ENCODE measurements at regions of chr10 and their contacts with region 1.

Region 1: DNA sequence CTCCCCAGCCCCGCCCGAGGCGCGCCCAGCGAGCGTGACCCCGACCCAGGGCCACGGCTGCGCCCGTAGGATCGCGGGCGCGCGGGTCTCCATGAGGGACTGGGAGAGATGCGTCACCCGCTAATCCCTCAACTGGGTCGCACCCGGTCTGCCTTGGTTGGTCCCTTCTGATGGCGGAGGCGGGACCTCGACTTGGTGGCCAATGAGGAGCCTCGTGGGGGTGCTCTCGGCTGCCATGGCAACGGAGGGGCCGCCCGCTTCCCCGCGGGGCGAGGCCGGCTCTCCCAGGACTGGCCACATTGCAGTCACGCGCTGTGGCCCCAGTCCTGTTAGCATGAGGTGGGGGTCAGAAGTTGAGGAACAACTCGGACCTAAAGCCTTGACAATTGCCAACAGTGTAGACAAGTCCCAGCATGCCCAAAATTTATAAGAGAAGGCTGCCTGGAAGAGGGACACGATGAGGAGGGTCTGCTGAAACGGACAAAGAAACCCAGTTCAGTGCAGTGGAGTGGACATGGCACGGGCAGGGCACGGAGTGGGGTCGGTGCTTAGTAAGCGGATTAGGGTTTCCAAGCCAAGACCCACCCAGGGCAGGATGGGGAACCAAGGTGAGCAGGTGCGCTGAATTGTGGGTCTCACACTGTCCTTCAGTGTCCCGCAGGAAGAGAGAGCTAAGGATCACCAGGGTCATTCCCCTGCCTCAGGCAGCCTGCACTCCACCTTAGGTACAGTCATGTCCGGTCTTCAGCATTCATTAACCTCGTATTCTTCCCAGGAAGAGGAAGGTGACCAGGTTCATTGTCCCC is 24.4 kb downstream of the DDIT4 start:
- DNase-seq: peak; percentile 56 to 93 (median 85)
- ATAC-seq: peak; percentile 56 to 63 (median 60)
- H3K4me3 ChIP-seq: peak overlapping the region in 1 of 2 donors; percentile 72
- H3K4me3 Mint-ChIP-seq: peak overlapping the region; percentile 72 to 78 (median 77)
- H3K27ac ChIP-seq: peak overlapping the region; percentile 99
- H3K27ac Mint-ChIP-seq: peak overlapping the region; percentile 66 to 96
- H3K4me1 ChIP-seq: peaks cover 8 to 49% of the 10 kb centered on the region in 2 experiments
- H3K4me1 Mint-ChIP-seq: peaks cover 50 to 60% (median 57%) of the 10 kb centered on the region in 3 donors
- H3K27me3 ChIP-seq: no peaks in the 10 kb centered on the region
- H3K27me3 Mint-ChIP-seq: no peaks in the 10 kb centered on the region

Region 2: GRCh38 chr10:72223743-72224101 is 74.4 kb before region 1 on chr10:
- CTCF ChIA-PET with region 1: no interaction called
- POLR2A ChIA-PET with region 1: no interaction called
- DNase-seq: no peak
- ATAC-seq: no peak
- H3K4me3 ChIP-seq: no peak overlapping the region
- H3K4me3 Mint-ChIP-seq: peak overlapping the region in 1 of 3 donors; percentile 55
- H3K27ac ChIP-seq: no peak overlapping the region
- H3K27ac Mint-ChIP-seq: peak overlapping the region in 1 of 2 donors; percentile 62
- H3K4me1 ChIP-seq: peaks cover 25 to 43% of the 10 kb centered on the region in 2 experiments
- H3K4me1 Mint-ChIP-seq: peaks cover 54 to 64% (median 56%) of the 10 kb centered on the region in 3 donors
- H3K27me3 ChIP-seq: no peaks in the 10 kb centered on the region
- H3K27me3 Mint-ChIP-seq: no peaks in the 10 kb centered on the region

Region 3: DNA sequence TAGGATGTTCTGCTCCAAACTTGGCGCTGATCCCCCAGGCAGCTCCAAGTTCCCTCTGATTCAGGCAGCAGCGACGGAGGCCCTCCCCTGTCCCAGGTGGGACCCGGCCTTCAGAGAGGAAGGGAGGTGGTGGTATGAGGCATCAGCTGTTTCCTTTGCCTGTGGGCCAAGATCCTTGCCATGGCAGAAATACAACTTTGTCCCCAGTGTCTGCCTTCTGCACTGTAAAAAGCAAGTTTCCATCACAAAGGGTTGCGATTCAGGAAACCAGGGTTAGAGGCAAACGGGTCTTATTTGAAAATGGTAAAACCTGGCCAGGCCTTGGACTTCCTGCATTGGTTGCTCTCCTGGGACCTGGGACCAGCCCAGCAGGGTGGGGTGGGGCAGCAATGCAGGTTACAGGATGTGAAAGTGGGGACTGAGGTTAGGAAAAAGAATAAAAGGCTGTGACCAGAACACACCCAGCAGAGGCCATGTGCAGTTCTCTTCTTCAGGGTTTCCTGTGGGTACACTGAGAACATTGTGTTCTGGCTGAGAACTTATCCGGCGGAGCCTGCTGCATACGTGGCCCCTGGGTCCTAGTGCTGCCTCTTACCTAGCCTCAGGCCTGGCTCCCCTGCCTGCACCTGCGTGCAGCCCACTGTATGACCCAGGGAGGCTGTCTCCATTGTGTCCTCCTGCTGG is 49.6 kb before region 1 on chr10:
- CTCF ChIA-PET with region 1: interaction called in 1 of 2 experiments, 5 read pairs
- POLR2A ChIA-PET with region 1: interaction called, 6 to 10 read pairs
- DNase-seq: peak; percentile 47 to 90 (median 72)
- ATAC-seq: peak; percentile 86 to 92 (median 90)
- H3K4me3 ChIP-seq: peak overlapping the region; percentile 36 to 75
- H3K4me3 Mint-ChIP-seq: peak overlapping the region; percentile 68 to 77 (median 77)
- H3K27ac ChIP-seq: peak overlapping the region; percentile 78
- H3K27ac Mint-ChIP-seq: peak overlapping the region; percentile 94 to 97
- H3K4me1 ChIP-seq: peaks cover 68 to 99% of the 10 kb centered on the region in 2 experiments
- H3K4me1 Mint-ChIP-seq: peaks cover 87 to 88% (median 88%) of the 10 kb centered on the region in 3 donors
- H3K27me3 ChIP-seq: no peaks in the 10 kb centered on the region
- H3K27me3 Mint-ChIP-seq: no peaks in the 10 kb centered on the region

Region 4: GRCh38 chr10:72273410-72274212 is 24.6 kb before region 1 on chr10 and contains the start of gene DDIT4:
- CTCF ChIA-PET with region 1: interaction called in 1 of 2 experiments, 26 read pairs
- POLR2A ChIA-PET with region 1: interaction called, 3 to 18 read pairs
- DNase-seq: peak; percentile 88 to 99 (median 98)
- ATAC-seq: peak; percentile 89 to 95 (median 93)
- H3K4me3 ChIP-seq: peak within 1 kb of the TSS; percentile 87 to 95
- H3K4me3 Mint-ChIP-seq: peak within 1 kb of the TSS; percentile 92 to 99 (median 92)
- H3K27ac ChIP-seq: peak within 1 kb of the TSS; percentile 88
- H3K27ac Mint-ChIP-seq: peak within 1 kb of the TSS; percentile 93
- H3K4me1 ChIP-seq: peaks cover 7 to 48% of the 10 kb centered on the region in 2 experiments
- H3K4me1 Mint-ChIP-seq: peaks cover 45 to 58% (median 50%) of the 10 kb centered on the region in 3 donors
- H3K27me3 ChIP-seq: no peaks in the 10 kb centered on the region
- H3K27me3 Mint-ChIP-seq: no peaks in the 10 kb centered on the region
- total RNA-seq, gene DDIT4: 39.9 to 326 (median 52.1) TPM

Region 5: DNA sequence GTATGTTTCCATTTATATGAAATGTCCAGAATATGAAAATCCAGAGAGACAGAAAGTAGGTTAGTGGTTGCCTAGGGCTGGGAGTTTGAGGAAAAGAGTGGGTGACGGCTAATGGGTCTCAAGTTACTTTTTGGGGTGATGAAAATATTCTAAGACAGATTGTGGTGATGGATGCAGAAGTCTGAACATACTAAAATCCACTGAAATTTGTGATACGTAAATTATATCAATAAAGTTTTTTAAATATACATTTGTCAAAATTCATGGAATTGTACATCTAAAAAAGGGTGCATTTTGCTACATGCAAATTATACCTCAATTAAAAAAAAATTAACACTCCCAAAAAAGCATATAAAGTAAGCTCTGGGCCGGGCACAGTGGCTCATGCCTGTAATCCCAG is 15.0 kb before region 1 on chr10:
- CTCF ChIA-PET with region 1: interaction called, 3 to 11 read pairs
- POLR2A ChIA-PET with region 1: interaction called in 1 of 2 experiments, 5 read pairs
- DNase-seq: no peak
- ATAC-seq: no peak
- H3K4me3 ChIP-seq: no peak overlapping the region
- H3K4me3 Mint-ChIP-seq: no peak overlapping the region
- H3K27ac ChIP-seq: no peak overlapping the region
- H3K27ac Mint-ChIP-seq: peak overlapping the region; percentile 53 to 62
- H3K4me1 ChIP-seq: peaks cover 9 to 28% of the 10 kb centered on the region in 2 experiments
- H3K4me1 Mint-ChIP-seq: peaks cover 37 to 47% (median 45%) of the 10 kb centered on the region in 3 donors
- H3K27me3 ChIP-seq: no peaks in the 10 kb centered on the region
- H3K27me3 Mint-ChIP-seq: no peaks in the 10 kb centered on the region

Region 6: GRCh38 chr10:72319416-72320254 is 21.5 kb after region 1 on chr10:
- CTCF ChIA-PET with region 1: interaction called in 1 of 2 experiments, 7 read pairs
- POLR2A ChIA-PET with region 1: interaction called in 1 of 2 experiments, 15 read pairs
- DNase-seq: peak; percentile 72 to 94 (median 85)
- ATAC-seq: peak; percentile 81 to 84 (median 82)
- H3K4me3 ChIP-seq: peak overlapping the region; percentile 40 to 50
- H3K4me3 Mint-ChIP-seq: peak overlapping the region; percentile 66 to 79 (median 72)
- H3K27ac ChIP-seq: peak overlapping the region; percentile 95
- H3K27ac Mint-ChIP-seq: peak overlapping the region; percentile 97 to 99
- H3K4me1 ChIP-seq: peaks cover 69 to 90% of the 10 kb centered on the region in 2 experiments
- H3K4me1 Mint-ChIP-seq: peaks cover 79 to 87% (median 86%) of the 10 kb centered on the region in 3 donors
- H3K27me3 ChIP-seq: no peaks in the 10 kb centered on the region
- H3K27me3 Mint-ChIP-seq: no peaks in the 10 kb centered on the region

Region 7: DNA sequence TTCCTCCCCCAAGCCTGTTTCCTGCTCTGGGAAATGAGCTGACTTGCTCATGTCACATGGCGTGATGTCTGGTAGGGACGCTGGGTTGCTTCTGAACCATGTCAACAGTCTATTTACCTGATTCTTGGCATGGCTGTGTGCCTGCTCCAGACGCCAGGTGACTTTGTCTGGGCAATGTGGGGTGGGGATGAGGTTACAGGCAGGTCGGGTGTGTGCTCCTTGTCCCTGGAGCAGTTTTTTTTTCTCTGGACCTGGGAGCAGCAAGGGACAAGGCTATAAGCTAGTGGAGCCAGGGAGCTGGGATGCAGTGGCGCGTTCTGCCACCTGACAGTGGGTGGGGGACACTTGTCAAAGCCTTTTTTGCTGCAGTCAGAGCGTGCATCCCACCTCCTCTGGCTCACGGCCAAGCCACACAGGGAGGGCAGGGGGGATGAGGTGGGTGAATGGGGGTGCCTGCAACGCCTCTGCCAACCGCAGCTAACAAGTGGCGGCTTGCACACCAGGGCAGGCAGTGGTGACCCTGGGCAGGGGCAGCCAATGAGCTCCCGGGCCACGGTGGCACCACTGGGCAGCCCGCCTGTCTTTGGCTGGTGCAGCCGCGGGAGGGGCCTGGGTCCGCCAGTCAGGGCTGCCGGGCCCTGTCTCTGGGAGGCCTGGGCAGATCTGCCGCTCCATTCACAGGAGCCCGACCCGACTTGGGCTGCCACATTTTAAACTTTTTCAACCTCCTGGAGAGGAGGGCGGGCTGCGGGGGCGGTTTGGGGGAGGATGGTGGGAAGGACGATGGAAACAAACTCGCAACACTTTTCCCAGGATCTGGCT is 33.6 kb after region 1 on chr10:
- CTCF ChIA-PET with region 1: interaction called, 3 to 15 read pairs
- POLR2A ChIA-PET with region 1: interaction called in 1 of 2 experiments, 13 read pairs
- DNase-seq: peak; percentile 65 to 97 (median 94)
- ATAC-seq: peak; percentile 68 to 77 (median 74)
- H3K4me3 ChIP-seq: peak overlapping the region; percentile 28 to 42
- H3K4me3 Mint-ChIP-seq: peak overlapping the region; percentile 64 to 85 (median 72)
- H3K27ac ChIP-seq: peak overlapping the region; percentile 90
- H3K27ac Mint-ChIP-seq: peak overlapping the region; percentile 92 to 95
- H3K4me1 ChIP-seq: peaks cover 81 to 100% of the 10 kb centered on the region in 2 experiments
- H3K4me1 Mint-ChIP-seq: peaks cover 89 to 95% (median 93%) of the 10 kb centered on the region in 3 donors
- H3K27me3 ChIP-seq: peaks cover 0 to 2% of the 10 kb centered on the region in 2 experiments
- H3K27me3 Mint-ChIP-seq: no peaks in the 10 kb centered on the region

Region 8: DNA sequence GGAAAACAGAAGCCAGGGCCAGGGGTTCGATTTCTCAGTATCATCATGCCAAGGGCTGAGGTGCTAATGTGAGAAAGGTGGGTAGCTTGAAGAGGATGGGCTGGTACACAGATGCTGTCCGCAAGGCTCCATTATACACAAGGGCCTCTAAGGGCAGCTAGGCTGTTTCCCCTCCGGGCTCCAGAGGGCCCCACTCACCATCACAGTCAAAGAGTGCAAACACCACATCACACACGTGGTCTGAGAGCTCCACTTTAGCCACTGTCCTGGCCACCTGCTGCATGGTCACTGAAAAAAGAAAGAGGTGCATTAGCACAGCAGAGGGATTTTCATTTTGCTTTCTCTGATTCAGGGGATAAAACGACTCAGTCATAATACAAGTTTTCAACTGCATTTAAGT is 77.4 kb after region 1 on chr10:
- CTCF ChIA-PET with region 1: no interaction called
- POLR2A ChIA-PET with region 1: no interaction called
- DNase-seq: no peak
- ATAC-seq: no peak
- H3K4me3 ChIP-seq: no peak overlapping the region
- H3K4me3 Mint-ChIP-seq: no peak overlapping the region
- H3K27ac ChIP-seq: no peak overlapping the region
- H3K27ac Mint-ChIP-seq: no peak overlapping the region
- H3K4me1 ChIP-seq: peaks cover 0 to 15% of the 10 kb centered on the region in 2 experiments
- H3K4me1 Mint-ChIP-seq: peaks cover 2 to 4% (median 2%) of the 10 kb centered on the region in 3 donors
- H3K27me3 ChIP-seq: no peaks in the 10 kb centered on the region
- H3K27me3 Mint-ChIP-seq: no peaks in the 10 kb centered on the region

Region 9: GRCh38 chr10:72455889-72456595 is 157.9 kb after region 1 on chr10:
- CTCF ChIA-PET with region 1: no interaction called
- POLR2A ChIA-PET with region 1: no interaction called
- DNase-seq: no peak
- ATAC-seq: no peak
- H3K4me3 ChIP-seq: no peak overlapping the region
- H3K4me3 Mint-ChIP-seq: no peak overlapping the region
- H3K27ac ChIP-seq: no peak overlapping the region
- H3K27ac Mint-ChIP-seq: no peak overlapping the region
- H3K4me1 ChIP-seq: no peaks in the 10 kb centered on the region
- H3K4me1 Mint-ChIP-seq: no peaks in the 10 kb centered on the region
- H3K27me3 ChIP-seq: no peaks in the 10 kb centered on the region
- H3K27me3 Mint-ChIP-seq: no peaks in the 10 kb centered on the region